PC-9 (cell line): ENCODE measurements at regions of chr7 and their contacts with region 1.

Region 1: GRCh38 chr7:33895025-33895804 is 10.1 kb upstream of the BMPER start:
- DNase-seq: peak in 1 of 2 experiments; percentile 75
- H3K4me3 ChIP-seq: no peak overlapping the region
- H3K27ac ChIP-seq: no peak overlapping the region
- H3K4me1 ChIP-seq: no peaks in the 10 kb centered on the region
- H3K27me3 ChIP-seq: peaks cover 31% of the 10 kb centered on the region; the same call in 1 of the 2 replicates
- CTCF ChIP-seq: peak; percentile 90

Region 2: DNA sequence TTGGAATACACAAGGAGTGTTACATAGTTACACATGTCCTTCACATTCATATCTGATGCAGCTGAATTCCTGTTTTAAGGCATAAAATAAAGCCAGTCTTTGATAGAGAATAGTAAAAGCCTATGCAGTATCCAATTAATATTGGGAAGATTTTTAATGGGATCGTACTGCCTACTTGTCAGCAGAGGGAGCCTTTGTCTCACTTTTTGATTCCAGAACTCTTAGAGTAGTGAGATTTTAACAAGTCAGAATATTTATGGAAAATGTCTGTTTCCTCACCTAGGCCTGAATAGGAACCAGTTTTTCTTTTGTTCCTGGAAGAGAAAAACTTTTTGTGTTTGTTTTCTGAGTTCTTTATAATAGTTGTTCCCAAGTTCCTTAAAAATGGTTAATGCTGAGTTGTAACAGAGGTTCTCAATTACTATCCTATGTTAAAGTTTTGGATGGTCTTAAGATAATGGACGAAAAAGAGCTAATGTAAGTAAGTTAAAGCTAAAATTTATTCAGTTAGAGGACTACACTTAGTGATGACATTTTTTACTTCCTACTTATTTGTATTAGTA is 651.8 kb before region 1 on chr7:
- CTCF ChIA-PET with region 1: no interaction called
- POLR2A ChIA-PET with region 1: no interaction called
- intact Hi-C with region 1: loop called (anchors 1 kb)
- DNase-seq: peak in 1 of 2 experiments; percentile 47
- H3K4me3 ChIP-seq: no peak overlapping the region
- H3K27ac ChIP-seq: no peak overlapping the region
- H3K4me1 ChIP-seq: no peaks in the 10 kb centered on the region
- H3K27me3 ChIP-seq: no peaks in the 10 kb centered on the region
- CTCF ChIP-seq: peak; percentile 91

Region 3: DNA sequence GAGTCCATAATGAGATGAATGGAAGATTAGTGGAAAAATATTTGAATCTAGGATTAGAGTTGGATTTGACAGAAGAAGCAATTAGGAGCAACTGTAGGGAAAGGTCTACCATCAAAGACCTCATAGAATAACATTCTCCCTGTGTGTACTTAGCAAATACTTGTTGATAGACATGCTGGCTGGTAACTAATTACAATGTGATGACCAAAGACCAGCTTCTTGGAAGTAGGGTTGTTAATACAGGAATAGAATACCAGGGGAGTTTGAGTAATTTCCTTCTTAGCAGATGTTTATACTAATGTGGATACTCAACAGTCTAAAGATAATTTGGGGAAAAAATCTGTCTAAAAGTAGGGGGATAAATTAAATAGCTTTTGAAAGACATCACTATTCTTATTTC is 347.3 kb before region 1 on chr7:
- CTCF ChIA-PET with region 1: no interaction called
- POLR2A ChIA-PET with region 1: interaction called, 15 read pairs
- intact Hi-C with region 1: no loop called
- DNase-seq: no peak
- H3K4me3 ChIP-seq: no peak overlapping the region
- H3K27ac ChIP-seq: no peak overlapping the region
- H3K4me1 ChIP-seq: no peaks in the 10 kb centered on the region
- H3K27me3 ChIP-seq: no peaks in the 10 kb centered on the region
- CTCF ChIP-seq: no peak

Region 4: GRCh38 chr7:33757562-33758165 is 137.6 kb before region 1 on chr7:
- CTCF ChIA-PET with region 1: no interaction called
- POLR2A ChIA-PET with region 1: no interaction called
- intact Hi-C with region 1: loop called (anchors 1 kb)
- DNase-seq: peak in 1 of 2 experiments; percentile 14
- H3K4me3 ChIP-seq: no peak overlapping the region
- H3K27ac ChIP-seq: no peak overlapping the region
- H3K4me1 ChIP-seq: no peaks in the 10 kb centered on the region
- H3K27me3 ChIP-seq: peaks cover 37% of the 10 kb centered on the region
- CTCF ChIP-seq: peak; percentile 89